Left cardiac atrium (tissue), 4 donors: ENCODE measurements at regions of chr6 and their contacts with region 1.

Region 1: DNA sequence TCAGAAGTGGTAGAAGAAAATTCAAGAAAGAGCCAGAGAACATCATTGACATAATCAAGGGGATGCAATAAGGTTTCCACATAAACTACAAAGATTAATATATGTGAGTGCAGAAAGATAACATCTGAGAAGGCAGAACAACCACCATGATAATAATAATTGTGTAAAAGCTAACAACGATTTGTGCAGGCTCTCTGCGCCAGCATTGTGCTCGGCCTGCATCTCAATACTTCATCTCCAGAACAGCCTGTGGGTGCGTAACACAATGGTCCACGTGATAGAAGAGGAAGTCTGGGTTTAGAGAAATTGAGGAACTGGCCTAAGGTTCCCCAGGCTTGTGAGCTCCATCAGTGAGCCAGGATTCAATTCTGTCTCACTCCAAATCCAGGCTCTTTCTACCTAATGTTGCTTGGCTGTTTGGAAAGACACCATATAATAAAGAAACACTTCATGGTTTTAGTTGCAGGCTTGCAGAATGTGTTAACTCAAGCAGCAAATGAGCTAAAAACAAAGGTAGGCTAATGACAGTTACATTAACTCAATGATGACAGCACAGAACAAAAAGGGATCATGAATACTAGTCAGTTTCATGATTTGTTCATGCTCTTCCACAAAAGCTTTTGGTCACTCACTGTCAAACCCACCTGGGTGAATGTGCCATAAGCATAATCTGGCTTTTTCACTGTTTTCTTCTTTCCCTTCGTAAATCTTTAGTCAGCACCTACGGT is 71.2 kb downstream of the LY86 start:
- DNase-seq: no peak
- ATAC-seq: peak; percentile 34 to 47

Region 2: DNA sequence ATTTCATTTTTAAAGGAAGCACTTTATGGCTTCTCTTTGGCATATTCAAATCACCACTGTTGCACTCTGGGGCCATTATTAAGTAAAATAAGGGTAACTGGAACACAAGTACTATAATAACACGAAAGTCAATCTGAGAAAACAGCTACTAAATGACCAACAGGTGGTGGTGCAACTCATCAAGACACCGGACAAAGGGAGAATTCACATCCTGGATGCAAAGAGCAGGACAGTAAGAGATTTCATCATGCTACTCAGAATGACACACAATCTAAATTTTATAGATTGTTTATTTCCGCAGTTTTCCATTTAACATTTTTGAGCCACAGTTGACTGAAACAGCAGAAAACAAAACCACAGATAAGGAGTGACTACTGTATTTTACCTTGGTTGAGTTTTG is 98.9 kb before region 1 on chr6:
- intact Hi-C with region 1: loop called in 1 of 2 experiments (anchors 10 kb)
- DNase-seq: no peak
- ATAC-seq: no peak

Region 3: DNA sequence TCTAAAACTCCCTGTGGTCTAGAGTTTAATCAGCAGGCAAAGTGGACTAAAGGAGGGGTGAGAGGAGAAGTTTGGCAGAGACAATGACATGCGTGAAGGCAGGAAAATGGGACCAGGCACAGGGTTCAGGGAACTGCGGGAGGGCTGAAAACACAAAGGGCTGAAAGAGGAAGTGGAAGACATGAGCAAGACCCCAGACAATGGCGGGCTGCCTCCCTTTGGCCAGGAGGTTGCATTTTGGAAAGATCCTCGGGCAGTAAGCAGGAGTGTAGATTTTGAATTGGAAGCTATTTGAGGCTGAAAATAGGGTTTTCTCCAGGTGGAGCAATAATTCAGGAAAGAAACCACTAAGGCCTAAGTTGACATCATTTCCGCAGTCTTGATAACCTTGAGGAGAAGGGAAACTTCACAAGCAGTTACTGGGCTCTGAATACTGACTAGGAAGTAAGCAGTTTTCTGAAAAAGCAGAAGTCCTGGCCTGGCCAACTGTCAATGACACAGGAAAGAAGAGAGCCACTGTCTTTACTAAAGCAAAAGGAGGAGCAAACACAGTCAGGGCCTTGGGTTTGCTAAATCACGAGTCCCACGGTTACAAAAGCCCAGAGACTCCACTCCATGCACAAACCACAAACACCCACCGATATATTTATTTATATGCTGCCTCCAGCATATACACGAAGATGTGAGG is 67.8 kb before region 1 on chr6:
- intact Hi-C with region 1: loop called in 1 of 2 experiments (anchors 5 kb)
- DNase-seq: no peak
- ATAC-seq: peak; percentile 20 to 45

Region 4: GRCh38 chr6:6614096-6614982 is 45.4 kb before region 1 on chr6:
- intact Hi-C with region 1: no loop called
- DNase-seq: no peak
- ATAC-seq: peak in 1 of 2 donors; percentile 82

Region 5: GRCh38 chr6:7098993-7099392 is 439.2 kb after region 1 on chr6:
- intact Hi-C with region 1: no loop called
- DNase-seq: no peak
- ATAC-seq: no peak